Common myeloid progenitor, CD34-positive (primary cell): ENCODE measurements at regions of chr17 and their contacts with region 1.

Region 1: GRCh38 chr17:29555840-29556239 is 11.0 kb downstream of the ABHD15 start:
- DNase-seq: no peak
- H3K4me3 ChIP-seq: no peak overlapping the region
- H3K27ac ChIP-seq: no peak overlapping the region
- H3K4me1 ChIP-seq: peaks cover 6 to 29% (median 21%) of the 10 kb centered on the region in 4 experiments
- H3K27me3 ChIP-seq: no peaks in the 10 kb centered on the region

Region 2: DNA sequence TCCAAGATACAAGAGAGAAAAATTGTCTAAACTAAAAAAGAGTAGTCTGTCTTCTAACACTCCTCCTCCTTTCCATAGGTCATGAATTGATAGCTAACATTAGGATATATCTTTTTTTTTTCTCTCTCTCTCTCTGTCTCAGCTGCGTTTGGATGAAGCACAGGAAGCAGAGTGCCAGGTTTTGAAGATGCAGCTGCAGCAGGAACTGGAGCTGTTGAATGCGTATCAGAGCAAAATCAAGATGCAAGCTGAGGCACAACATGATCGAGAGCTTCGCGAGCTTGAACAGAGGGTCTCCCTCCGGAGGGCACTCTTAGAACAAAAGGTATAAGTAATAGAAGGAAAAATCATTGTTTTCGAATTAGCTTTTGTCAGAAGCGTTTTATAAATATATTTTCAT is 21.9 kb before region 1 on chr17:
- CTCF ChIA-PET with region 1: interaction called, 11 read pairs
- POLR2A ChIA-PET with region 1: interaction called, 3 read pairs
- DNase-seq: no peak
- H3K4me3 ChIP-seq: no peak overlapping the region
- H3K27ac ChIP-seq: no peak overlapping the region
- H3K4me1 ChIP-seq: no peaks in the 10 kb centered on the region
- H3K27me3 ChIP-seq: no peaks in the 10 kb centered on the region

Region 3: GRCh38 chr17:29589524-29590410 is 33.9 kb after region 1 on chr17 and contains the start of gene GIT1:
- CTCF ChIA-PET with region 1: no interaction called
- POLR2A ChIA-PET with region 1: no interaction called
- DNase-seq: peak; percentile 81 to 90 (median 88)
- H3K4me3 ChIP-seq: peak within 1 kb of the TSS; percentile 56 to 90 (median 78)
- H3K27ac ChIP-seq: peak within 1 kb of the TSS in 1 of 2 experiments; percentile 54
- H3K4me1 ChIP-seq: peaks cover 4 to 86% (median 85%) of the 10 kb centered on the region in 4 experiments
- H3K27me3 ChIP-seq: no peaks in the 10 kb centered on the region

Region 4: DNA sequence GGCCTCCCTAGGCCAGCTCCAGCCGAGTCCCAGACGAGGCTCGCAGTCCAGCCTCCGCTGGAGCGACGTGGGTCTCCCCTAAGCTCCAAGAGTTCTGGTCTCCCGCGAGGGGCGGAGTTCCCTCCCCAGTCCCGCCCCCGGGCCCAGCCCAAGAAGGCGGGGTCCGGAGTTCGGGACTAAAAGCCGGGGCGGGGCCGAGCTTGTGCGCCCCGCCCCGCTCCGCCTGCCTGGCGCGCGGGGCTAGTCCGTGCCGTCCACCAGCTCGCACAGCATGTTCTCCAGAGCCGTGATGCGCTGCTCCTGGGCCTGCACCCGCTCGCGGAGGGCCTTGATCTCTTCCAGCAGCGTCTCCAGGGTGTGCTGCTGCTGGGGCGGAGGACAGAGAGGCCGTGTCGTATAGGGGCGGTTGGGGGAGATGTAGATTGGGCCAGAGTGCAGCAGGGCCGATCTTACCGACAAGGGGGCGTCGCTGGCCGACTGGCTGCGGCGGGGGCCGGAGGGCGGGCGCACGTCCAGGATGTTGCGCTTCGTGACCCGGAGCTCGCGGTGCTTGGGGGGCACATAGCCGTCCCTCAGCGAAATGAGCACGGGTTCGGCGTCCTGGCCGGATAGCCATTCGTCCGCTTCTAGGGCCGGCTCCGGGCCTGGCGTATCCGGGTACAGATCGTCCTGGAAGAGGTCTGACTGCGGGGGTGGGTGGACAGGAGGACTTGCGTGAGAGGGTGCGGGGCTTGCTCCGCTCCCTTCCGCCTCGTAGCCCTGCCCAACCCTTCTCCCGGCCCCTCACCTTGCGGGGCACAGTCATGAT is 59.9 kb after region 1 on chr17:
- CTCF ChIA-PET with region 1: no interaction called
- POLR2A ChIA-PET with region 1: no interaction called
- DNase-seq: peak; percentile 75 to 83 (median 81)
- H3K4me3 ChIP-seq: peak overlapping the region; percentile 41 to 82 (median 63)
- H3K27ac ChIP-seq: no peak overlapping the region
- H3K4me1 ChIP-seq: peaks cover 2 to 62% (median 56%) of the 10 kb centered on the region in 4 experiments
- H3K27me3 ChIP-seq: peaks cover 0 to 32% (median 17%) of the 10 kb centered on the region in 5 experiments

Region 5: DNA sequence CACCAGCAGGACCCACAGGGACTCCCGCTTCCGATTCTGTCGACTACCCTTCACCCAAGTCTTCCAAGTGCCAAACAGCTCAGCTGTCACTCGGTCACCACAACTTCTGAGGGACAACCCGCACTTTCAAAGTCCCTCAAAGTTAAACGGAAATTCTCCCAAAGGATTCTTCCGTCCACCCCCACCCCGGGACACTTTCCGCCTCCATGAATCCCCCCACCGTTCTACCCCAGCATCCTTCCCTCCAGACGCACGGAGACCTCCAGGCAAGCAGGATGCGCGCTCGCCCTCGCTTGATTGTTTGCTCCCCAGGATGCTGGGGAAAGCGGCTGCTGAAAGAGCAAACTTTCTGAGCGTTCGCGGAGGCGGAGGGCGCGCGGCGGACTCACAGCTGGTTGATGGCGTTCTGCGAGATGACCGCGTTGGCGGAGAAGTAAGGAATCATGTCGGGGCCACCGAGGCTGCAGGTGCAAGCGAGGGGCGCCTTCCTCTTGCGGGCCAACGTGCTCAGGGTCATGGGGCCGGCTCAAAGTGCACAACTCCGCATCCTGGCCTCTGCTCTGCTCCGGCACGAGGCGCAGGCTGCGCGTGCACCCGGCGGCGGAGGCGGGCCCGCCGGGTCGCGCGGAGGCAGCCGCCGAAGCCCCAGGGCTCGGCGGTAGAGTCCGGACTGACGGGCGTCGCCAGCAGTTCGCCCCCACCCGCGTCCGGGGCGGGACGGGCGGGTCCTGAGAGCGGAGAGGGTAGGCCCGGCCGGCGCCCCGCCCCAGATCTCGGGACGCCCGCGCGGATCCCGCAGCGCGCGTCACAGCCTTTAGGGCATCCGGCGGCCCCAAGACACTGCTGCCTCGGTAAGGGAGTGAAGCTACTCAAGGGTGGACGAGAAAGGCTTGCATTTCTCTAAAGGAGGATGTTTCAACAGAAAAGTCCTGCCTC is 205.2 kb after region 1 on chr17:
- CTCF ChIA-PET with region 1: no interaction called
- POLR2A ChIA-PET with region 1: no interaction called
- DNase-seq: peak; percentile 89 to 96 (median 95)
- H3K4me3 ChIP-seq: peak overlapping the region; percentile 73 to 95 (median 79)
- H3K27ac ChIP-seq: peak overlapping the region; percentile 15 to 73
- H3K4me1 ChIP-seq: peaks cover 16 to 47% (median 23%) of the 10 kb centered on the region in 4 experiments
- H3K27me3 ChIP-seq: no peaks in the 10 kb centered on the region